CD8-positive, alpha-beta T cell (primary cell): ENCODE measurements at regions of chr1 and their contacts with region 1.

Region 1: DNA sequence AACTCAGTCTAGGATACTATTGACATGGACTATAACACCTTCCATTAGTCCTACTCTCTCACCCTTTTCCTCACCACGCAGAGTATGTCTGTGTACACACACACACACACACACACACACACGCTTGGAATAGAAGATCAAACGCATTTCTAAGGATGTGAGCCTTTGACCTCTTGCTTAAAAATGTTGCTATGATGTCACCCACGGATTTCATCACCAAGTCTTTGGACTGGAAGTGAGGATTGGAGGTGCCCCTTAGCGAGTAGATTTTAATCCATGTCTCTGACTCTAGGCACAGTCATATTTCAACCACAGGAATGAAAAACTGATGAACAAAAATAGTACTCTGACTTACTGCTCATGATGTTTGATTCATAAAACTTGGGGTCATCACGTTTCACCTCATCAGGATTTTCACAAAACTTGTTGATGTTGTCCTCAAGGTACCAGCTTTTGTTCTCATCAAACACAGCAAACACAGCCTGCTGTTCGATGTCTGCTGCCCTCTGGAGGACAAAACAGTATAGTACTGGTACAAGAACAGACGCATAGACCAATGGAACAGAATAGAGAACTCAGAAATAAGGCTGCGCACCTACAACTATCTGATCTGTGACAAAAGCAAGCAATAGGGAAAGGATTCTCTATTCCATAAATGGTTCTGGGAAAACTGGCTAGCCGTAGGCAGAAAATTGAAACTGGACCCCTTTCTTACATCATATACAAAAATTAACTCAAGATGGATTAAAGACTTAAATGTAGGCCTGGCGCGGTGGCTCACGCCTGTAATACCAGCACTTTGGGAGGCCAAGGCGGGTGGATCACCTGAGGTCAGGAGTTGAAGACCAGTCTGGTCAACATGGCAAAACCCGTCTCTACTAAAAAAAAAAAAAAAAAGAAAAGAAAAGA is 39.9 kb downstream of the F5 start:
- DNase-seq: peak in 8 of 9 experiments; percentile 26 to 85 (median 52)
- ATAC-seq: peak; percentile 85
- H3K4me3 ChIP-seq: no peak overlapping the region
- H3K4me3 Mint-ChIP-seq: no peak overlapping the region
- H3K27ac ChIP-seq: no peak overlapping the region
- H3K27ac Mint-ChIP-seq: no peak overlapping the region
- H3K4me1 ChIP-seq: no peaks in the 10 kb centered on the region
- H3K4me1 Mint-ChIP-seq: no peaks in the 10 kb centered on the region
- H3K27me3 ChIP-seq: no peaks in the 10 kb centered on the region
- H3K27me3 Mint-ChIP-seq: no peaks in the 10 kb centered on the region
- CTCF ChIP-seq: peak; percentile 82

Region 2: DNA sequence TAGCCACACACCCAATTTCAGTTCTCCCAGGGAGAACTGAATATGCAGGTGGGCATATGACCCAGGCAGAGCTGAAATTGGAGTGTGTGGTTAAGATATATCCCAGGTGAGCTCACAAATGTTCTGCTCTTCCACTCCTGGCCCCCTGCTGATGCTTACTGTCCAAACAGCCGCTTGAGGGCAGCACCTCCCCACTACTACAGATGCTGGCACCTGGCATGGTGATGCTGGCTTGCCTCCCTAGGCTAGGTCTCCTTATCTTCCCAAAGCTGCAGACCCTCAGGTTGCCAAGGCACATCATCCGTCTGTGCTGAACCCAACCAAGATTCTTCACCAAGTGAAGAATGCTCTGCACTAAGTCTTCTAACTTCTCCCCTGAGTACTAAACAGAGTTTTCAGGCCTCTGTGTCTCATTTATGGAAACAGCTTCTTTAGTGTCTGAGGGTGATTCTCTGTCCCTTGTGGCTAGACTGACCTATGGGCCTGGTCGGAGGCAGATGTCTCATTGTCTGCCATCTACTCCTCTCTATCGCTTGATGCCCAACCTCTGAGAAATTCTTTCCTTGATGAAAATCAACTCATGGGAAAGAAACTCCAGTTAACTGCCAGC is 942.7 kb before region 1 on chr1:
- CTCF ChIA-PET with region 1: interaction called, 11 read pairs
- POLR2A ChIA-PET with region 1: no interaction called
- intact Hi-C with region 1: loop called in 1 of 2 experiments (anchors 1 kb)
- DNase-seq: peak; percentile 38 to 78 (median 68)
- ATAC-seq: peak; percentile 67
- H3K4me3 ChIP-seq: no peak overlapping the region
- H3K4me3 Mint-ChIP-seq: no peak overlapping the region
- H3K27ac ChIP-seq: no peak overlapping the region
- H3K27ac Mint-ChIP-seq: no peak overlapping the region
- H3K4me1 ChIP-seq: no peaks in the 10 kb centered on the region
- H3K4me1 Mint-ChIP-seq: no peaks in the 10 kb centered on the region
- H3K27me3 ChIP-seq: no peaks in the 10 kb centered on the region
- H3K27me3 Mint-ChIP-seq: no peaks in the 10 kb centered on the region
- CTCF ChIP-seq: peak; percentile 63

Region 3: GRCh38 chr1:169466259-169467230 is 79.8 kb before region 1 on chr1:
- CTCF ChIA-PET with region 1: interaction called, 17 read pairs
- POLR2A ChIA-PET with region 1: no interaction called
- intact Hi-C with region 1: loop called (anchors 1 kb)
- DNase-seq: peak in 3 of 9 experiments; percentile 16 to 49 (median 39)
- ATAC-seq: no peak
- H3K4me3 ChIP-seq: no peak overlapping the region
- H3K4me3 Mint-ChIP-seq: no peak overlapping the region
- H3K27ac ChIP-seq: no peak overlapping the region
- H3K27ac Mint-ChIP-seq: no peak overlapping the region
- H3K4me1 ChIP-seq: no peaks in the 10 kb centered on the region
- H3K4me1 Mint-ChIP-seq: peaks cover 4% of the 10 kb centered on the region
- H3K27me3 ChIP-seq: no peaks in the 10 kb centered on the region
- H3K27me3 Mint-ChIP-seq: no peaks in the 10 kb centered on the region
- CTCF ChIP-seq: peak; percentile 41

Region 4: GRCh38 chr1:169485544-169486278 is 60.6 kb before region 1 on chr1 and contains the start of gene SLC19A2:
- CTCF ChIA-PET with region 1: interaction called, 8 read pairs
- POLR2A ChIA-PET with region 1: no interaction called
- intact Hi-C with region 1: loop called in 1 of 2 experiments (anchors 1 kb)
- DNase-seq: peak; percentile 84 to 97 (median 93)
- ATAC-seq: peak; percentile 98
- H3K4me3 ChIP-seq: peak within 1 kb of the TSS; percentile 69 to 79
- H3K4me3 Mint-ChIP-seq: peak within 1 kb of the TSS; percentile 97
- H3K27ac ChIP-seq: peak within 1 kb of the TSS; percentile 73 to 79
- H3K27ac Mint-ChIP-seq: peak within 1 kb of the TSS; percentile 95
- H3K4me1 ChIP-seq: peaks cover 20% of the 10 kb centered on the region
- H3K4me1 Mint-ChIP-seq: peaks cover 43% of the 10 kb centered on the region
- H3K27me3 ChIP-seq: no peaks in the 10 kb centered on the region
- H3K27me3 Mint-ChIP-seq: no peaks in the 10 kb centered on the region
- CTCF ChIP-seq: no peak
- total RNA-seq, gene SLC19A2: 4.7 to 6.1 TPM

Region 5: DNA sequence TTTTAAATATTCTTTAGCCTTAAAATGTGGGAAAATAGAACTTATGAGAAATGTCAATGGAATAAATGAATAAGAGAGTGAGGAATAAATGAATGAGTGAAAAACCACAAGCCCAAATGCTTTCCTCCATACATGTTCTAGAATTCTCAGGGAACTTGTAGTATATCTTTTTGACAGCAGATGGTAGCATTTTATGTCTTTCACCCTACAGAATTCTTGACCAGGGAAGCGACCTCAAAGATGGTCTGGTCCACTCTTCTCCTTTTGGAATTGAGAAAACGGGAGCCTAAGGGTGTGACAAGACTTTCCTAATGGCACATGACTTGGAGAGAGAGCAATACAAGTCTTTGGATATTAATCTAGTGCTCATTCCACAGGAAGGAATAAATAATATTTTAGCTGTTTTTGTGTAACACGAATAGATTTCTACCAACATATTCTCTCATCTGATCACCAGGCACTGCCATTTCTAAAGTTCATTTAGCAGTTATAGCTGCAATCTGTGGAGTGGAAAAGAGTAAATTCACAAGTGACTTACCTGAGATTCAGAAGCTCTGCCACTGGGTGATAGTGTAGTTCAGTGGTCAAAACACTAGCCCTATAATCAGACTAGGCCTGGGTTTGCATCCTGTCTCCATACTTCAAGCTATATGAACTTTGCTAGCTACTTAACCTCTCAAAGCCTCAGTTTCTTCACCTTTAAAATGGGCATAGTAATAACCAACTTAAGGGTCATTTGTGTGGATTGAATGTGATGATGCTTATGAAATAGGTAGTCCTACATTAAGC is 54.9 kb after region 1 on chr1:
- CTCF ChIA-PET with region 1: interaction called, 7 read pairs
- POLR2A ChIA-PET with region 1: no interaction called
- intact Hi-C with region 1: loop called in 1 of 2 experiments (anchors 1 kb)
- DNase-seq: peak in 2 of 9 experiments; percentile 45 to 61
- ATAC-seq: no peak
- H3K4me3 ChIP-seq: no peak overlapping the region
- H3K4me3 Mint-ChIP-seq: no peak overlapping the region
- H3K27ac ChIP-seq: peak overlapping the region in 1 of 2 experiments; percentile 3
- H3K27ac Mint-ChIP-seq: peak overlapping the region; percentile 53
- H3K4me1 ChIP-seq: peaks cover 54% of the 10 kb centered on the region
- H3K4me1 Mint-ChIP-seq: peaks cover 54% of the 10 kb centered on the region
- H3K27me3 ChIP-seq: no peaks in the 10 kb centered on the region
- H3K27me3 Mint-ChIP-seq: no peaks in the 10 kb centered on the region
- CTCF ChIP-seq: peak; percentile 67

Region 6: GRCh38 chr1:170929835-170930554 is 1383.7 kb after region 1 on chr1:
- CTCF ChIA-PET with region 1: no interaction called
- POLR2A ChIA-PET with region 1: no interaction called
- intact Hi-C with region 1: loop called in 1 of 2 experiments (anchors 5 kb)
- DNase-seq: peak in 3 of 9 experiments; percentile 8 to 52 (median 41)
- ATAC-seq: no peak
- H3K4me3 ChIP-seq: no peak overlapping the region
- H3K4me3 Mint-ChIP-seq: no peak overlapping the region
- H3K27ac ChIP-seq: no peak overlapping the region
- H3K27ac Mint-ChIP-seq: no peak overlapping the region
- H3K4me1 ChIP-seq: no peaks in the 10 kb centered on the region
- H3K4me1 Mint-ChIP-seq: no peaks in the 10 kb centered on the region
- H3K27me3 ChIP-seq: no peaks in the 10 kb centered on the region
- H3K27me3 Mint-ChIP-seq: peaks cover 2% of the 10 kb centered on the region
- CTCF ChIP-seq: peak; percentile 80